ENCODE measurements at regions of chr6 and their contacts with region 1.

Region 1: GRCh38 chr6:122930252-122931180 is 65.5 kb upstream of the CLVS2 start:
- DNase-seq: peak; percentile 11
- ATAC-seq: peak; percentile 81
- H3K4me3 ChIP-seq: no peak overlapping the region
- H3K27ac ChIP-seq: no peak overlapping the region
- H3K4me1 ChIP-seq: no peaks in the 10 kb centered on the region
- H3K27me3 ChIP-seq: no peaks in the 10 kb centered on the region
- CTCF ChIP-seq: no peak
- EP300 ChIP-seq: peak; percentile 25 to 53; a peak in 1 of 4 replicates
- POLR2A ChIP-seq: no peak
- RAD21 ChIP-seq: no peak

Region 2: DNA sequence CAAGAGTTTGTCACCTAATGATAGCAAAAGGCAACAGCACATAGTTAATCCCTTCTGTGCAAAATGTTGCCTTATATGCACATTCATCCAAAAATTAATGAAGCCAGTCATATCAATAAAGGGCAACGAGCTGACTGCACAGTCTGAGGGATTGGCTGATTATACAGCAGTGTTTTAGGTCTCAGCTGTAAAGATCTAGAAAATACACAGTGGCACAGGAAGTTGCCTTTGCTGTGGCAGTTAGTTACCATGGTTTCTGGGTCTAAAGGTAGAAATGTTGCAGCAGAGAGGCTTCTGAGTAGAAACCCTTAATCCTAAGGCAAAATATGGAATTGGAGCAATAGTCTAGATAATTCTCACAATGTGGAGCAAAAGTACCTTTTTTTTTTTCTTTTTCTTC is 51.7 kb before region 1 on chr6:
- CTCF ChIA-PET with region 1: interaction called, 5 read pairs
- POLR2A ChIA-PET with region 1: interaction called, 4 read pairs
- RAD21 ChIA-PET with region 1: interaction called, 7 read pairs
- SMC1A ChIA-PET with region 1: interaction called, 66 read pairs
- in situ Hi-C with region 1: no loop called
- intact Hi-C with region 1: no loop called
- DNase-seq: no peak
- ATAC-seq: peak; percentile 60
- H3K4me3 ChIP-seq: no peak overlapping the region
- H3K27ac ChIP-seq: no peak overlapping the region
- H3K4me1 ChIP-seq: no peaks in the 10 kb centered on the region
- H3K27me3 ChIP-seq: no peaks in the 10 kb centered on the region
- CTCF ChIP-seq: no peak
- EP300 ChIP-seq: no peak
- POLR2A ChIP-seq: no peak
- RAD21 ChIP-seq: no peak

Region 3: GRCh38 chr6:123118593-123119228 is 188.2 kb after region 1 on chr6:
- CTCF ChIA-PET with region 1: no interaction called
- POLR2A ChIA-PET with region 1: no interaction called
- RAD21 ChIA-PET with region 1: no interaction called
- SMC1A ChIA-PET with region 1: no interaction called
- in situ Hi-C with region 1: no loop called
- intact Hi-C with region 1: no loop called
- DNase-seq: no peak
- ATAC-seq: no peak
- H3K4me3 ChIP-seq: no peak overlapping the region
- H3K27ac ChIP-seq: no peak overlapping the region
- H3K4me1 ChIP-seq: no peaks in the 10 kb centered on the region
- H3K27me3 ChIP-seq: no peaks in the 10 kb centered on the region
- CTCF ChIP-seq: no peak
- EP300 ChIP-seq: no peak
- POLR2A ChIP-seq: no peak
- RAD21 ChIP-seq: no peak

Measured in GM12878 (cell line).